IMR-90 (cell line): ENCODE measurements at regions of chr4 and their contacts with region 1.

Region 1: GRCh38 chr4:158182736-158183135 is 9.9 kb upstream of the GASK1B start:
- DNase-seq: no peak
- ATAC-seq: no peak
- H3K4me3 ChIP-seq: no peak overlapping the region
- H3K27ac ChIP-seq: no peak overlapping the region
- H3K4me1 ChIP-seq: no peaks in the 10 kb centered on the region
- H3K27me3 ChIP-seq: no peaks in the 10 kb centered on the region; the same call in 1 of the 2 replicates
- CTCF ChIP-seq: no peak
- POLR2A ChIP-seq: no peak
- RAD21 ChIP-seq: no peak

Region 2: DNA sequence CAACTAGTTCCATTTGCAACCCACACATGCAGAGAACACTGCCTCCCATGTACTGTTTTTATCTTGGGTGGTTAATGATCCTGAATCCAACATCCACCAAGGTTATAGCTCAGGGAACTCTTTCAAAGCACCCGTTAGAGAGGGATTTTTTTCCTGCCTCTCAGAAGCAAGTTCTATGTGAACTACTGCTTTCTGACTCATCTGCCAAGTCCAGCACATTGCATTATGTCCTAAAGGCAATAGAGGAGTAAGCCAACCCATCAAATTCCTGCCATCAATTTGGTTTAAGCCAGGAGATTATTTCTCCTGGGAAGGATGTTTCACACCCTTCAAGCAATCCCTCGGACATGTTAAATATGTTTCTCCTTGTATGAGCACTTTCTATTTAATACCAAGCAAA is 344.4 kb before region 1 on chr4:
- CTCF ChIA-PET with region 1: no interaction called
- POLR2A ChIA-PET with region 1: no interaction called
- dilution Hi-C with region 1: no loop called
- in situ Hi-C with region 1: no loop called
- intact Hi-C with region 1: no loop called
- DNase-seq: no peak
- ATAC-seq: no peak
- H3K4me3 ChIP-seq: no peak overlapping the region
- H3K27ac ChIP-seq: no peak overlapping the region
- H3K4me1 ChIP-seq: no peaks in the 10 kb centered on the region
- H3K27me3 ChIP-seq: no peaks in the 10 kb centered on the region
- CTCF ChIP-seq: no peak
- POLR2A ChIP-seq: no peak
- RAD21 ChIP-seq: no peak

Region 3: DNA sequence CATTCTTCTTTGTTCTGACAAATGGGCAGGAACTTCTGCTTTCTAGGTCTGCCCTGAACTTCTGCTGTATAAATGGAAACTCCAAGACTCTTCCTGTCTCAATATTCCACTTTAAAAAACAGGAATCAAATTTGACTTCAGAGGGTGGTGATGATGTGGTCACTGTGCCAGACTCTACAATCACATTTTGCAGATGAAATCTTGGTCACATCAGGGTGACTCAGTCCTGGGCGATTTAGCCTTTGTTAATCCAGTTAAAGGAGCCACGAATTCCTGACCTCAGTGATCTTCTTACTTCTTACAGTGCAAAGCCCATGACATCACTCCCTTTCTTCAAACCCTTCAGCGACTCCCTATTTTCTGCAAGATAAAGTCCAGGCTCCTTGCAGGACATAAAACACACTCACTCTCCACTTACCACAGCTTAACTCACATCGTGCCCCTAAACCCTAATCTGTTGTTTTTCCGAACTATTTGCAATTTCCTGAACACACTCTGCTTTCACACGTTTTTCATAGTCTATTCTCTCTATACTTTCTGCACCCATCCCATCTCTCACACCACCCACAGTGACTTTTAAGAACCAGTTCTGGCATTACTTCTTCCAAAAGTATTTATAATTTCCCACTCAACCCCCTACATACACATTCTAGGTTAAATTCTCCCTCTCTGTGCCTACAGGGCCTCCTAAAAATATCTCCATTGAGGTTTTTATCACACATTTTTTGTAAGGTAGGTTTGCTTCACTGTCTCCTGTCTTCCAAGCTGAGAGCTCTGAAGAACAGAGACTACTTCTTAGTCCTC is 21.0 kb before region 1 on chr4:
- CTCF ChIA-PET with region 1: no interaction called
- POLR2A ChIA-PET with region 1: no interaction called
- dilution Hi-C with region 1: no loop called
- in situ Hi-C with region 1: no loop called
- intact Hi-C with region 1: no loop called
- DNase-seq: peak; percentile 79
- ATAC-seq: peak; percentile 82
- H3K4me3 ChIP-seq: no peak overlapping the region
- H3K27ac ChIP-seq: peak overlapping the region; percentile 30; the same call in 1 of the 2 replicates
- H3K4me1 ChIP-seq: peaks cover 5% of the 10 kb centered on the region
- H3K27me3 ChIP-seq: no peaks in the 10 kb centered on the region
- CTCF ChIP-seq: no peak
- POLR2A ChIP-seq: no peak
- RAD21 ChIP-seq: no peak

Region 4: GRCh38 chr4:158193171-158193749 is 10.5 kb after region 1 on chr4:
- CTCF ChIA-PET with region 1: interaction called, 12 read pairs
- POLR2A ChIA-PET with region 1: no interaction called
- dilution Hi-C with region 1: no loop called
- in situ Hi-C with region 1: no loop called
- intact Hi-C with region 1: no loop called
- DNase-seq: peak; percentile 31
- ATAC-seq: peak; percentile 66; the same call in 1 of the 2 replicates
- H3K4me3 ChIP-seq: no peak overlapping the region
- H3K27ac ChIP-seq: no peak overlapping the region
- H3K4me1 ChIP-seq: no peaks in the 10 kb centered on the region
- H3K27me3 ChIP-seq: peaks cover 7% of the 10 kb centered on the region; the same call in 1 of the 2 replicates
- CTCF ChIP-seq: peak; percentile 61
- POLR2A ChIP-seq: no peak
- RAD21 ChIP-seq: peak; percentile 46